Naive thymus-derived CD4-positive, alpha-beta T cell (primary cell): ENCODE measurements at regions of chr2 and their contacts with region 1.

Region 1: GRCh38 chr2:112275306-112275886 is at the start of gene ZC3H6:
- DNase-seq: peak; percentile 96 to 100 (median 100)
- ATAC-seq: peak; percentile 98
- H3K4me3 ChIP-seq: peak within 1 kb of the TSS; percentile 99
- H3K4me3 Mint-ChIP-seq: peak within 1 kb of the TSS; percentile 85 to 95 (median 94)
- H3K27ac ChIP-seq: peak within 1 kb of the TSS; percentile 100
- H3K27ac Mint-ChIP-seq: peak within 1 kb of the TSS; percentile 90 to 99 (median 98)
- H3K4me1 ChIP-seq: peaks cover 14 to 18% of the 10 kb centered on the region in 2 donors
- H3K4me1 Mint-ChIP-seq: peaks cover 9 to 36% (median 25%) of the 10 kb centered on the region in 7 donors
- H3K27me3 ChIP-seq: no peaks in the 10 kb centered on the region
- H3K27me3 Mint-ChIP-seq: peaks cover 0 to 3% (median 0%) of the 10 kb centered on the region in 5 donors
- total RNA-seq, gene ZC3H6: 11.8 to 42.1 (median 23.7) TPM

Region 2: DNA sequence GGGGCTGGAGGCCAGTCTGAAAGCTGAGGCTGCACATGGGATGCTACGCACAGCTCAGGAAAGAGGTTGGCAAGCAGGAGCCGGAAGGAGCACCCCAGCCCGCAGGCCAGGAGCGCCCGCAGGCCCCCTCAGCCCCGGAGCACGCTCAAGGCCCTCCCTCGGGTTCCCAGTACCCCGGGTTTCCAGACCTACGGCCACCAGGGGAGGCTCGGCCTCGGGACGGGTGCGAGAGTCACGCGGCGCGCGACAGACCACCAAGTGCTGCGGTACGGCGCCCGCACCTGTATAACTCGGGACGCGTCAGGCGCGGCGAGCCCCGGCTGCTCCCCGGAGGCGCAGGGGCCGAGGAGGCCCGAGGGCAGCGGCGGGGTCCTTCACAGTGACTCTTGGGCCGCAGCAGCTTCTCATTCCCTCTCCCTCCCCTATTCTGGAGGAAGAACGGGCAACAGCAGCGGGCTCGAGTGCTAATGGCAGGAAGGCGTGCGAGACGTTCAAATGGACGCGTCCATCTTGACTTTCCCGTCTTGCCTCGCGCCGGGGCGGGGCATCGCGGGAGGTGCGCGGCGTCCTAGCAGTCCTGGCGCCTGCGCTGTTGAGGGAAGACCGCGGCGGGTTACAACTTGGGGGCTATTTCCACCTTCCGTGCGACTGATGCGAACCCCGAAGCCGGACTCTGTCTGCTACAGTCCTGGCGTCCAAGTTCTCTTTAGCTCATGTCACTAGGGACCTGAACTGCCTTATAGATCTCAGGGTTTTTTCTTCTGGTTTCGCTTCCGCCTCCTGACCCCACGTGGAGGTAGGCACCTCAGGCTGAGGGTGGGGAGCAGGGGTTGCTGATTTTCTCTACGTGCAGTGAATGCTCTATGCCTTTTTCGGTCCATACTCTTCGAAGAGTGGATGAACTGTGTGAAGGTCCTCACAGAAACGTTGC is 391.5 kb before region 1 on chr2 and contains the start of gene ANAPC1:
- CTCF ChIA-PET with region 1: no interaction called
- POLR2A ChIA-PET with region 1: no interaction called
- intact Hi-C with region 1: loop called in 1 of 2 experiments (anchors 5 kb)
- DNase-seq: peak; percentile 75 to 87 (median 84)
- ATAC-seq: peak; percentile 98
- H3K4me3 ChIP-seq: peak within 1 kb of the TSS; percentile 69
- H3K4me3 Mint-ChIP-seq: peak within 1 kb of the TSS; percentile 92 to 99 (median 96)
- H3K27ac ChIP-seq: peak within 1 kb of the TSS; percentile 85
- H3K27ac Mint-ChIP-seq: peak within 1 kb of the TSS; percentile 92 to 98 (median 96)
- H3K4me1 ChIP-seq: peaks cover 0 to 10% of the 10 kb centered on the region in 2 donors
- H3K4me1 Mint-ChIP-seq: peaks cover 2 to 26% (median 13%) of the 10 kb centered on the region in 7 donors
- H3K27me3 ChIP-seq: no peaks in the 10 kb centered on the region
- H3K27me3 Mint-ChIP-seq: no peaks in the 10 kb centered on the region
- total RNA-seq, gene ANAPC1: 51.8 to 77.2 (median 62.7) TPM

Region 3: DNA sequence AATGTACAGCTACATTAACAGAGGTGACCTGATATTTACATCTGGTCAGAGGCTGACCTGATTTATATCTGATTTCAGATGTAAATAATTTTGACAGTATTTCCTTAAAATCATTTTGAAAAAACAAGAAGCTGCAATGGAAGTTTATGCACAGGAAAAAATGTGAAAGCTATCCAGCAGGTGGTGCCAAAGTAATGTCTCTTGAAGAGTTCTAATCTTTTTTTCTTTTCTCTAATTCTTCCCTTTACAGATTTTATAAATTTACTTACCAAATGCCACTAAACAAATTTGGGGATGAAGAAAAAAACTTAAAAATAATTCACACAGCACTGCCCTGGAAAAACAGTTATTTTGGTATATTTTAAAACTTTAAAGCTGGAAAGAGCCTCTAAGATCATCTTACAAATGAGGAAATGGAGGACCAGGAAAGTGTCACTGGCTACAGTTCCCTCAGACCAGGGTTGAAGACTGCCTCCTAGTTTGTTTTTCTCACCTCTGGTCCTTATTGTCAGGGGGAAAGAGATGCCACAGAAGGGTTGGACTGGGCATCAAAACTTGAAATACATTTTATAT is 153.6 kb before region 1 on chr2:
- CTCF ChIA-PET with region 1: no interaction called
- POLR2A ChIA-PET with region 1: interaction called, 3 read pairs
- intact Hi-C with region 1: loop called in 1 of 2 experiments (anchors 1 kb)
- DNase-seq: peak in 7 of 9 donors; percentile 33 to 68 (median 56)
- ATAC-seq: no peak
- H3K4me3 ChIP-seq: no peak overlapping the region
- H3K4me3 Mint-ChIP-seq: no peak overlapping the region
- H3K27ac ChIP-seq: no peak overlapping the region
- H3K27ac Mint-ChIP-seq: peak overlapping the region in 3 of 9 donors; percentile 40 to 62 (median 47)
- H3K4me1 ChIP-seq: no peaks in the 10 kb centered on the region
- H3K4me1 Mint-ChIP-seq: peaks cover 0 to 8% (median 0%) of the 10 kb centered on the region in 7 donors
- H3K27me3 ChIP-seq: no peaks in the 10 kb centered on the region
- H3K27me3 Mint-ChIP-seq: no peaks in the 10 kb centered on the region

Region 4: DNA sequence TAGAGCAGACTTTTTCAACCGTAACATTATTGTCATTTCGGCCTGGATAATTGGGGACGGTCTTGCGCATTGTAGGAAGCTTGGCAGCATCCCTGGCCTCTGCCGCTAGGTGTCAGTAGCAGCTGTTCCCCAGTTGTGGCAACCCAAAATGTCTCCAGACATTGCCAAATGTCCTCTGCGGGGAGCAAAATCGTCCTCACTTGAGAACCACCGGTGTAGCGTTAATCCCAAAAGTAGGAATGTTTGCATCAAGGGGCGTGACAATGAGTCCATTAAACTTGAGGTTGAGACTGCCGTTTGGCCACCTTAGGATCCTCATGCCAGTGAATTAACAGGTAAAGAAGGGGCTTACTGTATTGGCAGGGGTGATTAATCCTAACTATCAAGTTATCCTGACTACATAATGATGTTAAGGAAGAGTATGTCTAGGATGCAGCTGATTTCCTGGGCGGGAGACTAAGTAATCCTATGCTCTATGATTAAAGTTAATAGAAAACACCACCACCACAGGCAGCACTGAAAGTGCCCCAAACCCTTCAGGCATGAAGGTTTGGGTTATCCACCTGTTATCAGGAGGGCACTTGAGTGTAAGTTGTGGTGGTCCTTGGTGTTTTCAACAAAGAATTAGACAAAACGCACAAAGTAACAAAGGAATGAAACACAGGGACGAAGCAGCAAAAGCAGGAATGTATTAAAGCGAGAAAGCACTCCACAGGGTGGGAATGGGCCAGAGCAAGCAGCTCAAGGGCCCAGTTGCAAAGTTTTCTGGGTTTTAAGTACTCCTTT is 15.7 kb before region 1 on chr2:
- CTCF ChIA-PET with region 1: interaction called, 3 read pairs
- POLR2A ChIA-PET with region 1: interaction called, 22 read pairs
- intact Hi-C with region 1: loop called (anchors 1 kb)
- DNase-seq: peak; percentile 63 to 85 (median 79)
- ATAC-seq: peak; percentile 69
- H3K4me3 ChIP-seq: peak overlapping the region; percentile 36
- H3K4me3 Mint-ChIP-seq: peak overlapping the region; percentile 19 to 78 (median 70)
- H3K27ac ChIP-seq: no peak overlapping the region
- H3K27ac Mint-ChIP-seq: peak overlapping the region; percentile 16 to 91 (median 70)
- H3K4me1 ChIP-seq: peaks cover 0 to 6% of the 10 kb centered on the region in 2 donors
- H3K4me1 Mint-ChIP-seq: peaks cover 4 to 23% (median 7%) of the 10 kb centered on the region in 7 donors
- H3K27me3 ChIP-seq: no peaks in the 10 kb centered on the region
- H3K27me3 Mint-ChIP-seq: peaks cover 0 to 9% (median 5%) of the 10 kb centered on the region in 5 donors

Region 5: DNA sequence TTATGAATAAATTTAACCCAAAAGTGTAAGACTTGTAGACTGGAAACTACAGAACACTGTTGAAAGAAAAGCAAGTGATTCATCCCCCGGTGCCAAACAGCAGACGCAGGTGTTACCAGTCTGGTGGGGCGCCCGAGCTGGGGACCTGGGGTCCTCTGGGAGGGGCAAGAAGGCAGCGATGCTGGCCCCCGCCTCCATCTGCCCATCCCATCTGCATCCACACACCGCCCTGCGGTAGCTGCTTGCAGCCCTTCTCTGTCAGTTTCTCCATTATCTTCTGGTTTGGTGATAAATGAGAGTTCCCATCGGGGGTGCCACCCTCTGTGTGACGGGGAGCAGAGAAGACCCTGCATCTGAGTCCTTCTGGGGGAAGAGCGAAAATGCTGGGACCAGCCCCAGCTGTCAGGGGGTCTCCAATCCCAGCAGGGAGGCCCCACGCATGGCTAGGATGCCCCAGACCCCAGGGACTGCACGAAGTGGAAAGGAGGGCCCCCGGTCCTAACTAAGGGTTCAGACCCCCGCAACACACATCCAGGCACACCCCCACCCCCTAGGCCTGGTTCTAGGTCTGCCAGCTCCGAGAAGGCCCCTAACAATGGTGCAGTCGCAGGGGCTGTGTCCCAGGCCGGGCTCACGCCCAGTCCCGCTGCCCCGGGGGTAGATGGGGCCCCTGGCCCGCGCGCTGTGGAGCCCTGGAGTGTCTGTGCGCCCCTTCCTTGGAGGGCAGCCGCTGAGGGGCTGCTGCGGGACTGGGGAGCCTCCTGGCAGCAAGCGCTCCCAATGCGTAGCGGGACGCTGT is 158.7 kb after region 1 on chr2:
- CTCF ChIA-PET with region 1: no interaction called
- POLR2A ChIA-PET with region 1: no interaction called
- intact Hi-C with region 1: no loop called
- DNase-seq: peak in 1 of 9 donors; percentile 3
- ATAC-seq: no peak
- H3K4me3 ChIP-seq: no peak overlapping the region
- H3K4me3 Mint-ChIP-seq: peak overlapping the region in 4 of 10 donors; percentile 15 to 81 (median 60)
- H3K27ac ChIP-seq: no peak overlapping the region
- H3K27ac Mint-ChIP-seq: peak overlapping the region in 4 of 9 donors; percentile 6 to 84 (median 63)
- H3K4me1 ChIP-seq: no peaks in the 10 kb centered on the region
- H3K4me1 Mint-ChIP-seq: peaks cover 7 to 30% (median 22%) of the 10 kb centered on the region in 7 donors
- H3K27me3 ChIP-seq: no peaks in the 10 kb centered on the region
- H3K27me3 Mint-ChIP-seq: peaks cover 0 to 13% (median 6%) of the 10 kb centered on the region in 5 donors

Region 6: DNA sequence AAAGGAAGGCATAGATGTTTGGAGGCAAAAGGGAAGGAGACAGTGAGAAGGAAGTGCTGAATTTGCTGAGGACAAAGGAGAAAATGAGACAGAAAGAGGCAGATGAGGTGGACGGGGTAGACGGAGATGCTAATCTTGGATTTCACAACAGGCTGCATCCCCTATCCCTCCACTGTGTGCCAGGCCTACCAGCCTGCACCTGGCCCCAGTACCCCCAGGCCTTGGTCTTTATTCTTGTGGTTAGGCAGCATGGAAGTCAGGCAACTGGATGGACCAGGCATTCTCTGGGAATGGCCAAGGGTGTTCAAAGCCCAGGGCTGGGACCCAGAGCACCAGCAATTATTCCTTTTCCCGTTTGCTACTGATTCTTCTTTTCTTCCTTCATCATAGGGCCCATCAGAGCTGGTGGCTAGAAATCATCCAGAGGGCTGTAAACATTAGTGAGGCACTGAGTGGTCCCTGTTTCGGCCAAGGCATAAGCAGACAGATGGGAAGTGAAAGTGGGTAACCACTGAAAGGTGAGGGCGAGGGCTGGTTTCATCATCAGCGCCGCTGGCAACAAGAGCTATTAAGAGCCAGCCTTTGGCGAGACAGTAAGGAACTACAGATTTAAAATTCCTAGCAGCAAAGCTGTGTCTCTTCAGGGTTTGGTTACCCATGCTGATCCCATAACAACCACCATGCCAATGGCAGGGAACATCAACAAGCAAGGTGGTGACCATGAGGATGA is 361.0 kb after region 1 on chr2:
- CTCF ChIA-PET with region 1: no interaction called
- POLR2A ChIA-PET with region 1: no interaction called
- intact Hi-C with region 1: loop called (anchors 5 to 10 kb)
- DNase-seq: no peak
- ATAC-seq: no peak
- H3K4me3 ChIP-seq: no peak overlapping the region
- H3K4me3 Mint-ChIP-seq: peak overlapping the region in 6 of 10 donors; percentile 1 to 73 (median 35)
- H3K27ac ChIP-seq: no peak overlapping the region
- H3K27ac Mint-ChIP-seq: peak overlapping the region in 6 of 9 donors; percentile 16 to 95 (median 82)
- H3K4me1 ChIP-seq: peaks cover 50 to 59% of the 10 kb centered on the region in 2 donors
- H3K4me1 Mint-ChIP-seq: peaks cover 44 to 81% (median 55%) of the 10 kb centered on the region in 7 donors
- H3K27me3 ChIP-seq: no peaks in the 10 kb centered on the region
- H3K27me3 Mint-ChIP-seq: no peaks in the 10 kb centered on the region